Activated CD4-positive, alpha-beta memory T cell treated with anti-CD3 and anti-CD28 coated beads for 36 hours (primary cell): ENCODE measurements at regions of chr3 and their contacts with region 1.

Region 1: DNA sequence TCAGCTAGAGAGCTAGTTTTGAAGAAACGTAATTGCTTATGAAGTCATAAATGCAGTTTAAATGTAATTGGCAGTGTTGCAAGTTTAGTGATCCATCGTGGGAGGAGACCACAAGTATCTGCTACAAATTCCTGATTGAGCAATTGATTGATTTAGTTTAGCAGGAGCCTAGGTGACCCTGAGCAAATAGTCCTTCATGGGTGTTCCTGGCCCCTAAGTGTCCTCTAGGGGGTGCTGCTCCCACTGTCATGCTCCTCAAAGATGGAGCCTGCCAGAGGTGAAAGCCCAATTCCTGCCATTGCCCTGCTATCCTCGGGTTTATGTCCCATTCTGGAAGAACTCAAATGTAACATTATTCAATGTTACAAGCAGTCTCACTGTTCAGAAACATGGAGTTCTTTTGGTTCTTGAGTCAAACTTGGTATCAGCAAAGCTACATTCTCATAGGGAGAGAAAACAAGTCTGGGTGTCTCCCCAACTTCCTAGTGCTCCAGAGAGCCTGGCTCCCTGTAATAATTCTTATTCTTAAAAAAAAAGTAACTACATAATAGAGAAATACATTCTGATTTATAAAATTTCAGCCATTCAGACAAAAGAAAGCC is 29.8 kb upstream of the SENP5 start:
- DNase-seq: peak; percentile 85
- H3K4me3 Mint-ChIP-seq: no peak overlapping the region
- H3K27ac Mint-ChIP-seq: no peak overlapping the region
- H3K4me1 Mint-ChIP-seq: no peaks in the 10 kb centered on the region
- H3K27me3 Mint-ChIP-seq: no peaks in the 10 kb centered on the region

Region 2: DNA sequence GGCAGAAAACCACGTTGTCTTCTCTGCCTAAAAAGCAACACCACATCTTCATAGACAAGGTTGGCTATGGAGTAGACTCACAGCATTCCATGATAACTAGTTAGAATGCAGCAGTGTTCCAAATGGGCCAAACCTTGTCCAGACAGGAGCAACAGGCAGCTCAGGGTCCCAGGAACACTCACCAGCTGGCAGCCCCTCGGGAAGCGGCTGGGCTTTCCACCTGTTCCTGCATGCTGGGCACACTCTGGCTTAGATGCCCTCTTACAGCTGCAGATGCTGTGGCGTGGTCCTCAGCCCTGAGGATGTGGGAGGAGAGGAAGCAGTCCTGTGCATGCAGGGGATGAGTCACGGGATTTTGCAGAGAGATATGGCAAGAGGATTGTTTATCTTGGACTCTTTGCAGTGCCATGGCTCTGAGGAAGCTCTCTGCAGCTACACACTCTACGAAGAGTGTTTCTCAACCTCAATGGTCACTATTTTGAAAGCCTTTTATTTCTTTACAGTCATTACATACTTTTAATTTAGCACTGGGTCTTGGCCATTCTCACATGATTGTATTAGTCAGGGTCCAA is 187.1 kb before region 1 on chr3:
- CTCF ChIA-PET with region 1: no interaction called
- POLR2A ChIA-PET with region 1: no interaction called
- intact Hi-C with region 1: no loop called
- DNase-seq: peak; percentile 47
- H3K4me3 Mint-ChIP-seq: no peak overlapping the region
- H3K27ac Mint-ChIP-seq: peak overlapping the region; percentile 24
- H3K4me1 Mint-ChIP-seq: peaks cover 53% of the 10 kb centered on the region
- H3K27me3 Mint-ChIP-seq: no peaks in the 10 kb centered on the region

Region 3: GRCh38 chr3:196849180-196849741 is 11.3 kb after region 1 on chr3:
- CTCF ChIA-PET with region 1: interaction called, 14 read pairs
- POLR2A ChIA-PET with region 1: no interaction called
- intact Hi-C with region 1: no loop called
- DNase-seq: no peak
- H3K4me3 Mint-ChIP-seq: no peak overlapping the region
- H3K27ac Mint-ChIP-seq: no peak overlapping the region
- H3K4me1 Mint-ChIP-seq: no peaks in the 10 kb centered on the region
- H3K27me3 Mint-ChIP-seq: peaks cover 8% of the 10 kb centered on the region

Region 4: DNA sequence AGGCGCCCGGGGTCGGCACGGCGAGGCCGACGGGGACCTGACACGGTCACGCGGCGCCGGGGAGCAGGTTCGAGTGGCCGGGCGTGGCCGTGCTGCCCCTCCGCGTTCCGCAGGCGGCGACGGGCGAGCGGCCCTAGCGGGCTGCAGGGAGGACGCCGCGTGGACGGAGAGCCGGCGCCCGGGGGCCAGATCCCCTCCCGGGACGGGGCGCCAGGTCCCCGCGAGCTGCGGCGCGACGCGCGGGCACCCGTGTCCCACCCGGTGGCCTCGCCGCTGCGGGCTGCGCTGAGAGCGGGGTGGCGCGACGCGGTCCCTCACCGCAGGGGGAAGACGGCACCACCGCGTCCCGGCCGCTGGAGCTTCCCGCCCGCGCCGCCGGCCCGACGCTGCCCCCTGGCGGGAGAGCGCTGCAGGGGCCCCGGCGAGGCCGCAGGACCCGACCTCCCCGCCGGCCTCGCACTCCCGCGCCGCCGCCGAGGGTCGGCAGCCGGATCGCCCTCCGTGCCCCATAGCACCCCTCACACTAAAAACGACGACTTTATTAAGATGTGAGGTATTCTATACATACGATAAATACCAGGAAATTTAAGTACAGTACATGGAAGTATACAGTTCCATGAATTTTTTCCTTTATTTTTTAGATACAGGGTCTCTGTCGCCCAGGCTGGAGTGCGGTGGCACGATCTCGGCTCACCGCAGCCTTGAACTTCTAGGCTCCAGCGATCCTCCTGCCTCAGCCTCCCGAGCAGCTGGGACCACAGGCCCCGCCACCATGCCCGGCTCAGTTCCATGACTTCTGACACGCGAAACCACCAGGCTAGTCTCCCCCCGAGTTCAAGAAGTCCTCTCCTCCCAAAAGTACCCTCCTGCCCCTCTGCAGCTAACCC is 132.0 kb after region 1 on chr3:
- CTCF ChIA-PET with region 1: interaction called, 34 read pairs
- POLR2A ChIA-PET with region 1: interaction called, 5 read pairs
- intact Hi-C with region 1: loop called (anchors 1 kb)
- DNase-seq: peak; percentile 78
- H3K4me3 Mint-ChIP-seq: peak overlapping the region; percentile 58
- H3K27ac Mint-ChIP-seq: no peak overlapping the region
- H3K4me1 Mint-ChIP-seq: peaks cover 12% of the 10 kb centered on the region
- H3K27me3 Mint-ChIP-seq: peaks cover 12% of the 10 kb centered on the region